H1 (cell line): ENCODE measurements at regions of chr1 and their contacts with region 1.

Region 1: GRCh38 chr1:233440951-233441401 is 113.5 kb downstream of the MAP3K21 start:
- DNase-seq: peak; percentile 51 to 54
- H3K4me3 ChIP-seq: no peak overlapping the region
- H3K27ac ChIP-seq: no peak overlapping the region
- H3K4me1 ChIP-seq: peaks cover 0 to 6% (median 2%) of the 10 kb centered on the region in 4 experiments; a peak in 2 of 7 replicates
- H3K27me3 ChIP-seq: no peaks in the 10 kb centered on the region
- CTCF ChIP-seq: peak in 2 of 3 experiments; percentile 71 to 77; a peak in 3 of 4 replicates
- EP300 ChIP-seq: no peak
- POLR2A ChIP-seq: no peak
- RAD21 ChIP-seq: peak; percentile 94 to 96

Region 2: DNA sequence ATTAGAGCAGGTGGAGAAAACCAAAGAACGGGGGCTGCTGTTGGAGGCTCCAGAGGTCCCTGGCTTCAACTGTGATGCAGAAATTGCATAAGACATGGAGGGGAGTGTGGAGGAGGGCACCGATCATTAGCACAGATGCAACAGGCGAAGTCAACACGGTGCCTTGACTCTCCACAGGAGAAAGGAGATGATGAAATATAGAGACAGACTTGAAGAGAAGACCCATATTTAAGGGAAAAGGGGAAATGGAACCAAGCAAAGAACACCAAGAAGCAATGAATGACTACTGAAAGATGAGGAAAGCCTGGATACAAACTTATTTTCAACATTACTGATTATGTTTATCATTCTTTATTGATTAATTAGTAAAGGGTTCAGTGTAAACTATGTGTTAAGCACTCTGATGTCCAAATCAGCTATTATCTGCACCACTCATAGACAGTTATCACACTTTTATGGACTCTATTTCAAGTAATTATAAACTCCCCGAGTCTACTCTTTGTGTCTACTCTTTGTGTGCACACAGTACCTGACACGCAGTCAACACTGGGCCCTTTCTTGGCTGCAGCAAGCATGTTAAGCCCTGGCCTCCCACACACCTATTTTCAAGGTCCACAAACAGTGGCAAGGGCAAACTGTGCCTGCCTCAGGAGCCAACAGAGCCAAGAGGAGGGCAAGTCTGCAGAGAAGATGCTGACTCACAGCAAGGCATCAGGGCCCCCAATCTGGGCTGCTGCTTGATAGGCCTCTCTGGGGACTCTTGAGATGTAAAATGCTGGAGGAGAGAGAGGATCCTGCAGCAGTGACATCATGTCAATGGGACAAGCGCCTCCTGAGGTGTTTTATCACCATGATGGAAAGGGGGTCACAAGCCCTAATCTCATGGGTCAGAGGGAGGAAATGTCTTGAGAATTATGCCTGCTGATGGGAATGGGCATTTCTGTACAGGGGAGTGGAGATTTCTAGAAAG is 163.1 kb before region 1 on chr1:
- CTCF ChIA-PET with region 1: no interaction called
- POLR2A ChIA-PET with region 1: no interaction called
- DNase-seq: no peak
- H3K4me3 ChIP-seq: no peak overlapping the region
- H3K27ac ChIP-seq: peak overlapping the region; percentile 17; the same call in 1 of the 2 replicates
- H3K4me1 ChIP-seq: peaks cover 0 to 6% (median 1%) of the 10 kb centered on the region in 4 experiments; a peak in 2 of 7 replicates
- H3K27me3 ChIP-seq: no peaks in the 10 kb centered on the region
- CTCF ChIP-seq: no peak
- EP300 ChIP-seq: no peak
- POLR2A ChIP-seq: no peak
- RAD21 ChIP-seq: no peak

Region 3: DNA sequence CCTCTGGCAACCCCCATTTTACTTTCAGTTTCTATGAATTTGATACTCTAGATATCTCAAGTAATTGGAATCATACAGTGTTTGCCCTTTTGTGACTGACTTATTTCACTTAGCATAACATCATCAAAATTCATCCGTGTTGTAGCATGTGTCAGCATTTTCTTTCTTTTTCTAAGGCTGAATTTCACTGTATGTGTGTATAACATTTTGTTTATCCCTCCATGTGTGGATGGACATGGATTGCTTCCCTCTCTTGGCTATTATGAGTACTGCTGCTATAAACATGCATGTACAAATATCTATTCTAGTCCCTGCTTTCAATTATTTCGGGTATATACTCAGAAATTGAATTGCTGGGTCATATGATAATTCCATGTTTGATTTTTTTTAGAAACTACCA is 16.2 kb before region 1 on chr1:
- CTCF ChIA-PET with region 1: interaction called, 16 read pairs
- POLR2A ChIA-PET with region 1: no interaction called
- DNase-seq: no peak
- H3K4me3 ChIP-seq: no peak overlapping the region
- H3K27ac ChIP-seq: no peak overlapping the region
- H3K4me1 ChIP-seq: no peaks in the 10 kb centered on the region
- H3K27me3 ChIP-seq: no peaks in the 10 kb centered on the region
- CTCF ChIP-seq: peak in 1 of 3 experiments; percentile 6; a peak in 1 of 4 replicates
- EP300 ChIP-seq: no peak
- POLR2A ChIP-seq: no peak
- RAD21 ChIP-seq: no peak

Region 4: DNA sequence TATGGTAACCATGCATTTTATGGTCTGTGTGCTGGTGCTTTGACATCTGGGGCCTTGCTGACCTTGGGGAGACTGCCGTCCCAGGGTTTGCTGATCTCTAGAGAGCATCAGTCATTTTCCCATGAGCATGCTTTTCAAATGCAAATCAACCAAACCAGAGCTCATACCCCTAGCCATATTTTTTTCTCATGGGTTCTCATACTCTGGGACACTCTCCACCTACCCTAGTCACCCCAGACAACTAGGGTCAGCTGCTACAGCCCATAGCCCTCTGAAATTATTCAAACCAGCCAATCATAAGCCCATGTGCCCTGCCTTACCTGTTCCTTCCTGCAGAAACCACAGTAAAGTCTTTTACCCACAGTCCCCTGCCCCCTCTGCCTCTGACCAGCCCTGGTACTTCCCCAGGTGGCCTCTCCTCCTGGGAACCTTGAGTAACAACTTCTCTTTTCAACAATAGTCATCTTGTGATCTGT is 18.5 kb after region 1 on chr1:
- CTCF ChIA-PET with region 1: interaction called, 23 read pairs
- POLR2A ChIA-PET with region 1: no interaction called
- DNase-seq: no peak
- H3K4me3 ChIP-seq: no peak overlapping the region
- H3K27ac ChIP-seq: no peak overlapping the region
- H3K4me1 ChIP-seq: peaks cover 0 to 8% (median 3%) of the 10 kb centered on the region in 4 experiments; a peak in 4 of 7 replicates
- H3K27me3 ChIP-seq: no peaks in the 10 kb centered on the region
- CTCF ChIP-seq: no peak
- EP300 ChIP-seq: no peak
- POLR2A ChIP-seq: no peak
- RAD21 ChIP-seq: no peak

Region 5: GRCh38 chr1:233897325-233898162 is 456.6 kb after region 1 on chr1:
- CTCF ChIA-PET with region 1: interaction called, 10 read pairs
- POLR2A ChIA-PET with region 1: no interaction called
- DNase-seq: no peak
- H3K4me3 ChIP-seq: no peak overlapping the region
- H3K27ac ChIP-seq: no peak overlapping the region
- H3K4me1 ChIP-seq: no peaks in the 10 kb centered on the region
- H3K27me3 ChIP-seq: no peaks in the 10 kb centered on the region; a peak in 2 of 7 replicates
- CTCF ChIP-seq: no peak
- EP300 ChIP-seq: no peak
- POLR2A ChIP-seq: no peak
- RAD21 ChIP-seq: no peak